GM12878 (cell line): ENCODE measurements at regions of chr1 and their contacts with region 1.

Region 1: GRCh38 chr1:185170291-185170848 is 13.4 kb downstream of the SWT1 start:
- DNase-seq: peak; percentile 32
- ATAC-seq: peak; percentile 97
- H3K4me3 ChIP-seq: no peak overlapping the region
- H3K27ac ChIP-seq: no peak overlapping the region
- H3K4me1 ChIP-seq: no peaks in the 10 kb centered on the region; the same call in 1 of the 2 replicates
- H3K27me3 ChIP-seq: no peaks in the 10 kb centered on the region
- CTCF ChIP-seq: peak; percentile 64 to 70 (median 67)
- EP300 ChIP-seq: no peak
- POLR2A ChIP-seq: no peak
- RAD21 ChIP-seq: peak; percentile 85

Region 2: DNA sequence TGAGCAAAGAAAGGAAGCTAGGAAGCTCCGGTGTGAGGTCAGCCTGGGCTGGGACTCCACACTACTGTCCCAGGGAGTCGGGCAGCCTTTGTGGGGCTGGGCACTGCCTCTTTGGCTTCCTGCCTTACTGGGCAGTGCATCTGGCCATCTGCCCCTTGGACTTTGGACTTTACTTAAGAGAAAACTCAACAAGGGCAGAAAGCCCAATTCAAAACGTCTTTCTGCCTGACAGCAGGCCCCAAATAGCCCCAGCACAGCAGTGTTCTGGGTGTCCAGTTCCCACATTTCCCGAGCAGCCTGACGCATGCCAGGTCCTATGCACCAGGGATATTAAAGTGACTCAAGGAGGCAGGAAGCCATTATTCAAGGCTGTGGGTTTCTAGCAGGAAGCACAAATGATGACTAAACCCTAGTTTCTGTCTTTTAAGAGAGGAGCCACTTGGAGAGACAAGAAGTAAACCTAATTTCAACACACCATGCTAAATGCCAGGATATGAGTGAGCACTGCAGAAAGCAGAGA is 377.9 kb before region 1 on chr1:
- CTCF ChIA-PET with region 1: interaction called, 12 read pairs
- POLR2A ChIA-PET with region 1: no interaction called
- RAD21 ChIA-PET with region 1: interaction called, 3 read pairs
- SMC1A ChIA-PET with region 1: no interaction called
- in situ Hi-C with region 1: no loop called
- intact Hi-C with region 1: no loop called
- DNase-seq: no peak
- ATAC-seq: peak; percentile 74
- H3K4me3 ChIP-seq: no peak overlapping the region
- H3K27ac ChIP-seq: no peak overlapping the region
- H3K4me1 ChIP-seq: no peaks in the 10 kb centered on the region
- H3K27me3 ChIP-seq: no peaks in the 10 kb centered on the region
- CTCF ChIP-seq: no peak
- EP300 ChIP-seq: no peak
- POLR2A ChIP-seq: no peak
- RAD21 ChIP-seq: no peak

Region 3: DNA sequence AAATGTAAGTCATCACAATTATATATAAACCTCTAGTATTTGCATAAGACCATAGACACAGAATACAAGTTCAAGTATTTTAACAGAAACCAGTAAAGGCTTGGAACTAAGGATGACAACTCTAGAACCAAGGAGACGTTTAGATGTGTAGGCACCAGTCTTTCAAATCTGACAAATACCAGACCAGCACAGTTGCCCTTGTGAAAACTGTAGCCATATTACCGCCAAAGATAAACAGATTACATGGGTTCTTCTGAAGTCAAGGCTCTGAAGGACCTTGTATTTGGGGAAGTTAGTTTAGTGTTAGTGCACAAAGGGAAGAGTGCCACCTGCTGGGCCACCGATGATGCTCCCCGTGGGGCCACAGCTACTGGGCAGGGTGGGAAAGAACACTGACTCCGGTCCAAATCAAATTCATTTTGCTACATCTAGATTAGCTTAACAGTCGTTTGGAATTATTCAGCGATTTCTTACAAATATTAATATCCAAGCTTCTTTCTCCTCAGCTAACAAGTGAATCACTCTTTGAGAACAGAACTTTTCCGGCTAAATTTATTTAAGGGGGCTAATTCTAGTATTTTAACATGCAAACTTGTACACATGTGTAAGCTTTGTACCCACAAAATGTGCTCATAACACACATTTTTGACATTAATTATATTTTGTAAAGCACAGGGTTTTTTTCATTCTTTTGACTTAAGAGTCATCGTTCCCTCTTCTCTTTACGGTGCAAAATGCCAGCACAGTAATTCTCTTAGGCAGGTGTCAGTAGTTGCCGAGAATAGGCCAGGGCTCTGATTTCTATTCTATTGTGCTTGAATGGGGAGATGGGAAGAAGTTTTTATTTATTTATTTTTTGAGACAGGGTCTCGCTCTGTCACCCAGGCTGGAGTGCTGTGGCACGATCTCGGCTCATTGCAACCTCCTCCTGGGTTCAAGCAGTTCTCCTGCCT is 188.1 kb before region 1 on chr1:
- CTCF ChIA-PET with region 1: interaction called, 58 read pairs
- POLR2A ChIA-PET with region 1: no interaction called
- RAD21 ChIA-PET with region 1: interaction called, 33 read pairs
- SMC1A ChIA-PET with region 1: interaction called, 25 read pairs
- in situ Hi-C with region 1: no loop called
- intact Hi-C with region 1: loop called (anchors 1 kb)
- DNase-seq: no peak
- ATAC-seq: peak; percentile 100
- H3K4me3 ChIP-seq: no peak overlapping the region
- H3K27ac ChIP-seq: no peak overlapping the region
- H3K4me1 ChIP-seq: no peaks in the 10 kb centered on the region
- H3K27me3 ChIP-seq: no peaks in the 10 kb centered on the region
- CTCF ChIP-seq: peak; percentile 86 to 95 (median 91)
- EP300 ChIP-seq: no peak
- POLR2A ChIP-seq: no peak
- RAD21 ChIP-seq: peak; percentile 97

Region 4: DNA sequence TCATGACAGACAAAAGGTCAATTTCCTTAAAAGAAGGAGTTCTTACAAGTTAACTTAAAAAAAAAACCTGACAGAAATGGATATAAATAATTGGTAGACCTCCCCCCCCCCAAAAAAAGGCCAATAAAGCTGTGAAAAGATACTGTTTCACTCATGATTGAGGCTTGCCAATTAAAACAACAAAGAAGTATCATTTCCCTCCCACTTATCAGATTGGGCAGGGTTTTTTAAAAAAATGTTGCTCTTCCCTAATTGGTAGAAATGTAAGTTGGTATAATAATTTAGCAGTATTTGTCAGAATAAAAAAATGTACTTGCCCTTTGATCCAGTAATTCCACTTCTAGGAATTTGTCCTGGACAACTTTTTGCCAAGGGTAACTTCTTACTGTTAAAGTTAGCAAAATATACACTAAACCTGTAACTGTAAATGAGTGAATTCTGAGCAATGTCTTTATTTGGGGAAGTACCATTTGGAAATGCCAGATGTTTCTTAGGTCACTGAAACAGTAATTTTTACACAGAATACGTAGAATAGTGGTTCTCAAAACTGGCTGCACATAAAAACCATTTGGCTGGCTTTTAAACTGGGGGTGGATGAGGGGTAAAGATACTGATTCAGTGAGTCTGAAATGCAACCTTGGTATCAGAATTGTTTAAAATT is 107.5 kb before region 1 on chr1:
- CTCF ChIA-PET with region 1: interaction called, 11 read pairs
- POLR2A ChIA-PET with region 1: no interaction called
- RAD21 ChIA-PET with region 1: interaction called, 10 read pairs
- SMC1A ChIA-PET with region 1: interaction called, 7 read pairs
- in situ Hi-C with region 1: no loop called
- intact Hi-C with region 1: no loop called
- DNase-seq: no peak
- ATAC-seq: peak; percentile 62
- H3K4me3 ChIP-seq: no peak overlapping the region
- H3K27ac ChIP-seq: no peak overlapping the region
- H3K4me1 ChIP-seq: no peaks in the 10 kb centered on the region
- H3K27me3 ChIP-seq: no peaks in the 10 kb centered on the region
- CTCF ChIP-seq: no peak
- EP300 ChIP-seq: no peak
- POLR2A ChIP-seq: no peak
- RAD21 ChIP-seq: no peak

Region 5: GRCh38 chr1:185144233-185144632 is 26.1 kb before region 1 on chr1:
- CTCF ChIA-PET with region 1: interaction called, 25 read pairs
- POLR2A ChIA-PET with region 1: no interaction called
- RAD21 ChIA-PET with region 1: interaction called, 3 read pairs
- SMC1A ChIA-PET with region 1: interaction called, 15 read pairs
- in situ Hi-C with region 1: no loop called
- intact Hi-C with region 1: no loop called
- DNase-seq: no peak
- ATAC-seq: no peak
- H3K4me3 ChIP-seq: no peak overlapping the region
- H3K27ac ChIP-seq: no peak overlapping the region
- H3K4me1 ChIP-seq: no peaks in the 10 kb centered on the region
- H3K27me3 ChIP-seq: no peaks in the 10 kb centered on the region
- CTCF ChIP-seq: no peak
- EP300 ChIP-seq: no peak
- POLR2A ChIP-seq: no peak
- RAD21 ChIP-seq: no peak

Region 6: DNA sequence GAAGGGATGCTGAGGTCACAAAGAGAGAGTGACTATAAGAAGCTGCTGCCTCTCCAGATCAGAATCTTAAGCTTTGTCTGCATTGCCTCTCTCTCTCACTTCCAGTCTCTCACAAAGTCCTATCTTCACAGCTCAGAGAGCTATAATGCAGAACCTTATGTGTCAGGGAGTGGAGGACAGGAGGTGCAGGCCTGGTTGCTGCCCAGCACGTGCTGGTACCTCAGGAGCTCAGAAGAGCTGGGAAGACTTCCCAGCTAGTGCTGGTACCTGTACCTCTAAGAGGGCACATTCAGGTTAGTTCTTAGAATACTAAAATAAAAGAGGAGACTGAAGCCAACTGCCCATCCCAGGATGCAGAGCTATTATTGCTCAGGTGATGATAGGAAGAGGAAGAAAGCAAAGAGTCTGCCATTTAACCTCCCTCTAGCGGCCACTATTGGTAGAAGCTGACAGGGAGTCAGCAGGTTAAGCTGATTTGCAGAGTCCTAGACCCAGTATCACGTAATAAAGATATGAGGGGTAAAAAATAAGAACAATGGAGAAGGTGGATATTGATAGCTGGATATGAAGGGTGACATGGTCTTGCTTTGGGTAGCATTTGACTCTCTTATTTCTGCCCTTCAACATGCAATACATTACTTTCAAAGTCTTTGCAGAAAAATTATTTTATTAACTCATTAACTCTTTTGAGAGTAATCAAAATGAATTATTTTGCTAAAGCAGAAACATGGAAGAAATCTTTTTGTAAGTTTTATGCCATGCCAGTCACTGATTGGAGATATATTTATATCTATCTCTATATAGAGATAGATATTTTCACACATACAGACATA is 425.7 kb after region 1 on chr1:
- CTCF ChIA-PET with region 1: interaction called, 13 read pairs
- POLR2A ChIA-PET with region 1: no interaction called
- RAD21 ChIA-PET with region 1: interaction called, 3 read pairs
- SMC1A ChIA-PET with region 1: no interaction called
- in situ Hi-C with region 1: no loop called
- intact Hi-C with region 1: no loop called
- DNase-seq: peak; percentile 13
- ATAC-seq: peak; percentile 98
- H3K4me3 ChIP-seq: no peak overlapping the region
- H3K27ac ChIP-seq: no peak overlapping the region
- H3K4me1 ChIP-seq: no peaks in the 10 kb centered on the region
- H3K27me3 ChIP-seq: no peaks in the 10 kb centered on the region
- CTCF ChIP-seq: peak; percentile 71 to 86 (median 83)
- EP300 ChIP-seq: no peak
- POLR2A ChIP-seq: no peak
- RAD21 ChIP-seq: peak; percentile 72